Heart left ventricle (tissue), 16 donors: ENCODE measurements at regions of chr9 and their contacts with region 1.

Region 1: DNA sequence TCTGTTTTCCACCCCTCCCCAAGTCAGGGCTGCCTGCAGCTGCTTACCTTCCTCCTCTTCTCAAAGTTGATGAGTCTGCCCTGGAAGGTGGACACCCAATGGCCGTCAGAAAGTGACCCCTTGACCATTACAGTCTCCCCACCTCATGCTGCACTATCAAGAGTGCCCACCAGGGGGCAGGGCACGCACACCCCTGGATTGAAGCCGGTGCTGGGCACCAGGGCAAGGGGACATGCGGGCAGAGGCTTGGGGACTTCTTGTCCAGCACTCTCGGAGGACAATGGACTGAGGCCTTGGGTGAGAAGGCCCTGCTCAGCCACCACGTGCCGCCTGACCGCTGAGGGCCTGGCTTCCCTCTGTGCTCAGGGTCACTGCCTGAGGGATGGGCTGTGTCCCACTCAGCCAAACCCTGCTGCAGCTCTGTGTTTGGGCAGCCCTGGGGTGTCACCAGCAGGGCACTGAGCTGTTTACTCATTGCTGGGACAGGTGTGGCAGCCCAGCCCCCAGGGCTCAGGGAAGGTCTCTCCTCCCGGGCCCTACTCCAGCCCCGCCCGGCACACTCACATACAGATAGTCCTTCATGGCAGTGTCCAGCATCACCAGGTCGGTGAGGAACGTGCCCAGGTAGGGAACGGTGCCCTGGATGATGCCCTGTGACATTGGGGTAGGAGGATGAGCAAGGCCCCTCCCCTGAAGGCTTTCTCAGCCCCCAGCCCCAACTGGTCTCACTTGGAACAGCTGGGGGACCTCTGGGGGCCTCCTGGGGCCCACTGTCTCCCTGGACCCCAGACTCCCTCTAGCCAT is 17.7 kb downstream of the RALGDS start:
- DNase-seq: peak; percentile 62 to 87 (median 66)
- ATAC-seq: peak; percentile 35 to 78 (median 68)
- H3K4me3 ChIP-seq: no peak overlapping the region
- H3K27ac ChIP-seq: peak overlapping the region in 1 of 12 donors; percentile 33
- H3K4me1 ChIP-seq: peaks cover 0 to 3% (median 0%) of the 10 kb centered on the region in 12 donors
- H3K27me3 ChIP-seq: no peaks in the 10 kb centered on the region
- CTCF ChIP-seq: peak; percentile 87 to 100 (median 98)
- POLR2A ChIP-seq: no peak

Region 2: DNA sequence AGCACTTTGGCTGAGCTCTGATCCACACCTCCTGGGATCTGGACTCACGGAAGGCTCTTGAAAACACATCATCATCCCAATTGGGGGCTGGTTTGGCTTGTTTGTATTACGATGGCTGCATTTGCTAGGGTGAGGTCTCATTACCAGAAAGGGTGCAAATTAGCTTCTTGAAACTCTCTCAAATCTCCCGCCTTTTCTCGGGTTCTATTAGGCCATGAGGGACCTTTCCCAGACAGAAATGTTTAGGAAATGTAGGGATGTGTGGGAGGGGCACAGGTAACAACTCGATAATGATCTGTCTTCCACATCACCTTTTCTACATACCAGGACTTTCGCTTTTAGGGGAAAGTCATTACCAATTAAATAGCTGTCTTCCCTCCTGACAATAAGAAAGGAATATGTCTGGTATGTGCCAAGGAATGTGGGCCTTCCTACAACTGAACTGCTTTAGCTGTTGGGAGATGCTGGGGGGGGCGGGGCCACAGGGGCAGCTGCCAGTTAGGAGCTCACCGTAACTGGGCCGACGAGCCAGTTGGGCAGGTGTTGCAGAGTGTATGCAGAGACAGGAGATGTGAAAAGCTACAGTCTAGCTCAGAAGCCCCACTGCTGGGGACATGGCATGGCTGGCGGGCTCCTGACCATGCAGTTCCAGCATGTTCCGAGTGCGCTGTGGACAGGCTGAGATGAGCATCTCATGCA is 296.5 kb before region 1 on chr9:
- intact Hi-C with region 1: no loop called
- DNase-seq: no peak
- ATAC-seq: no peak
- H3K4me3 ChIP-seq: no peak overlapping the region
- H3K27ac ChIP-seq: no peak overlapping the region
- H3K4me1 ChIP-seq: no peaks in the 10 kb centered on the region
- H3K27me3 ChIP-seq: peaks cover 0 to 8% (median 0%) of the 10 kb centered on the region in 9 donors
- CTCF ChIP-seq: no peak
- POLR2A ChIP-seq: no peak

Region 3: GRCh38 chr9:133035669-133036068 is 67.7 kb before region 1 on chr9:
- intact Hi-C with region 1: loop called in 2 of 10 experiments (anchors 5 kb)
- DNase-seq: no peak
- ATAC-seq: no peak
- H3K4me3 ChIP-seq: no peak overlapping the region
- H3K27ac ChIP-seq: no peak overlapping the region
- H3K4me1 ChIP-seq: peaks cover 8 to 23% (median 17%) of the 10 kb centered on the region in 12 donors
- H3K27me3 ChIP-seq: no peaks in the 10 kb centered on the region
- CTCF ChIP-seq: no peak
- POLR2A ChIP-seq: no peak